HCT116 (cell line): ENCODE measurements at regions of chr1 and their contacts with region 1.

Region 1: GRCh38 chr1:10796019-10796944 is at the start of gene CASZ1:
- DNase-seq: peak; percentile 87
- ATAC-seq: peak; percentile 75
- H3K4me3 ChIP-seq: peak within 1 kb of the TSS; percentile 53 to 73
- H3K27ac ChIP-seq: no peak within 1 kb of the TSS; the same call in 1 of the 2 replicates
- H3K4me1 ChIP-seq: peaks cover 5 to 35% of the 10 kb centered on the region in 2 experiments; a peak in 3 of 4 replicates
- H3K27me3 ChIP-seq: peaks cover 26% of the 10 kb centered on the region
- CTCF ChIP-seq: no peak
- POLR2A ChIP-seq: no peak
- RAD21 ChIP-seq: no peak
- total RNA-seq, gene CASZ1: 7.7 TPM

Region 2: DNA sequence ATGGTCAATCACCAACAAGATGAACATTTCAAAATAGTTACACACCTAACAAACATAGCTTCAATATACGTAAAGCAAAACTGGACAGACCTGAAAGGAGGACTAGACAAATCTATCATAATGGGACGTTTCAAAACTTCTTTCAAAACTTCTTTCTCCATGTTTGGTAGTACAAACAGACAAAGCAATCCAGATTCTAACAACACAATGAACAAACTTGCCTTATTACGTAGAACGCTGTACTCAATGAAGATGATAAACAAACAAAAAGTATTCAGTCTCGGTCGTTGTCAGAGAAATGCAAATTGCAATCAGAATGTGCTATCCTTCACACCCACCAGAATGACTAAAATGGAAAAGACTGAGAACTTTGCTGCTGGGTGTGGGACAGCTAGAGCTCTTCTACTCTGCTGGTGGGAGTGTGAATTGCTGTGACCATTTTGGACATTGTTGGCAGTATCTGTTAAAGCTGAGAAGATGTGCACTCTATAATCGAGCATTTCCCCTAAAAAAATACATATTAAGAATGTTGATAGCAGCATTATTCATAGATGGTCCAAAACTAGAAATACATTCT is 210.2 kb before region 1 on chr1:
- CTCF ChIA-PET with region 1: no interaction called
- POLR2A ChIA-PET with region 1: no interaction called
- RAD21 ChIA-PET with region 1: no interaction called
- intact Hi-C with region 1: no loop called
- DNase-seq: no peak
- ATAC-seq: peak; percentile 52; the same call in 1 of the 2 replicates
- H3K4me3 ChIP-seq: no peak overlapping the region
- H3K27ac ChIP-seq: no peak overlapping the region
- H3K4me1 ChIP-seq: no peaks in the 10 kb centered on the region
- H3K27me3 ChIP-seq: no peaks in the 10 kb centered on the region
- CTCF ChIP-seq: peak in 2 of 3 experiments; percentile 18 to 24; a peak in 2 of 6 replicates
- POLR2A ChIP-seq: no peak
- RAD21 ChIP-seq: no peak

Region 3: DNA sequence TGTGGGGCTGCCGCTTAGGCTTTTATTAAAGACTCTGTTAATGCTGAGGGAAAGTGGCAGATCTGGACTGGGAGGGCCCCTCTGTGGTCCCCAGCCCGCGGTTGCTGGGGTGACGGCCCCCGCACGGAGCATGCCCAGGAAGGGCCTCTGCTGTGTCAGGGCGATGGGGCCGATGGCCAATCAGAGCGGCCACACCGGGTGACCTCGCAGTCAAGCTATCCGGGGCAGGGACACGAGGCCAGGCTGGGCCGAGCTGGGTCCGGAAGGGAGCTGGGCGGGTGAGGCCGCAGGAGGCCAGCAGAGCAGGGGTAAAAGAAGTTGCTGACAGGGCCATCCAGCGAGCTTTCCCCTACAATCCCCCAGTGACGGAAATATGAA is 144.9 kb before region 1 on chr1:
- CTCF ChIA-PET with region 1: no interaction called
- POLR2A ChIA-PET with region 1: no interaction called
- RAD21 ChIA-PET with region 1: no interaction called
- intact Hi-C with region 1: no loop called
- DNase-seq: no peak
- ATAC-seq: peak; percentile 61
- H3K4me3 ChIP-seq: no peak overlapping the region
- H3K27ac ChIP-seq: no peak overlapping the region
- H3K4me1 ChIP-seq: peaks cover 0 to 10% of the 10 kb centered on the region in 2 experiments; a peak in 1 of 4 replicates
- H3K27me3 ChIP-seq: no peaks in the 10 kb centered on the region
- CTCF ChIP-seq: no peak
- POLR2A ChIP-seq: no peak
- RAD21 ChIP-seq: no peak

Region 4: GRCh38 chr1:10679496-10680220 is 116.6 kb before region 1 on chr1:
- CTCF ChIA-PET with region 1: no interaction called
- POLR2A ChIA-PET with region 1: no interaction called
- RAD21 ChIA-PET with region 1: no interaction called
- intact Hi-C with region 1: loop called (anchors 1 kb)
- DNase-seq: peak; percentile 65
- ATAC-seq: peak; percentile 85
- H3K4me3 ChIP-seq: no peak overlapping the region
- H3K27ac ChIP-seq: no peak overlapping the region
- H3K4me1 ChIP-seq: peaks cover 0 to 6% of the 10 kb centered on the region in 2 experiments; a peak in 1 of 4 replicates
- H3K27me3 ChIP-seq: no peaks in the 10 kb centered on the region
- CTCF ChIP-seq: no peak
- POLR2A ChIP-seq: no peak
- RAD21 ChIP-seq: no peak

Region 5: DNA sequence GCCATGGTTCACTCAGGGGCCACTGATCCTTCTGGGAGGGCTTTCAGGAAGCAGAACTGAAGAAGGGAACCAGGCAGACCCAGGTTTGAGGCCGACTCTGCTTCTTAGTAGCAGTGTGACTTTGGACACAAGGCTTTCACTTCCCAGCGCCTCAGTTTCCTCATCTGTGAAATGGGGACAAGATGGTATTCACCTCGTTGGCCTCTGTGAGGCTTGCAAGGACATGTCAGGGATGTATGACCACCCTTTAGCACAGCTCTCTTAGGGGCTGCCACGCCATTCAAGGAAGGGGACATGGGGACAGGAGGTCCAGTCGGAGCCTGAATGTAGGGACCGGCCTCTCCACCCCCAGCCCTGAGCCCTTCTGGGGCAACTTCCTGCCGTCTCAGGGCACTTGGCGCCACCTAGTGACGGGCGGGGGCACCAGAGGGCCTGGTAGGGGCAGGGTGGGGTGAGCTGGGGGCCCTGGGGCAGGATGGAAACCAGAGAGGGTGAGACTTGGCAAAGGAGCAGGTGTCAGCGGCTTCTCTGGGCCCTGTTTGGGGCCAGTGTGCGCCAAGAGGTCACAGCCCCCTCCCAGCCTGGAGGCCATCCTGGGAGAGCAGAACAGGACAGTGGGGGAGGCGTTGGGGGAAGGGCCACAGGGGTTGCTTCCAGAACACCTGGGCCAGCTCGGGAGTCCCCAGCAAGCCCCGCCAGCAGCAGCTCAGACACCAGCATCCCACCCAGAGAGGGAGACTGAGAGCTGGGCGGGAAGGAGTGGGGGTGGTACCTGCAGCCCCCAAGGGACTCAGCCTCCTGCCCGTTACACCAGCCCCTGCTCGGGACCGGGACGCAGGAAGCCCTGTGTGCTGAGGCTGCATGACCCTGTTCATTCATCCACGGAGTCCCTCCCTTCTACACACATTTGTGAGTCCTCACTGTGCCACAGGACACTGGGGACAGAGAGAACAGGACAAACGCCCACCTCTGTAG is 113.7 kb after region 1 on chr1:
- CTCF ChIA-PET with region 1: no interaction called
- POLR2A ChIA-PET with region 1: no interaction called
- RAD21 ChIA-PET with region 1: no interaction called
- intact Hi-C with region 1: loop called (anchors 2 kb)
- DNase-seq: no peak
- ATAC-seq: peak; percentile 95
- H3K4me3 ChIP-seq: no peak overlapping the region
- H3K27ac ChIP-seq: no peak overlapping the region
- H3K4me1 ChIP-seq: no peaks in the 10 kb centered on the region
- H3K27me3 ChIP-seq: no peaks in the 10 kb centered on the region
- CTCF ChIP-seq: peak in 2 of 3 experiments; percentile 67 to 86; a peak in 5 of 6 replicates
- POLR2A ChIP-seq: no peak
- RAD21 ChIP-seq: peak; percentile 88